IMR-90 (cell line): ENCODE measurements at regions of chr4 and their contacts with region 1.

Region 1: DNA sequence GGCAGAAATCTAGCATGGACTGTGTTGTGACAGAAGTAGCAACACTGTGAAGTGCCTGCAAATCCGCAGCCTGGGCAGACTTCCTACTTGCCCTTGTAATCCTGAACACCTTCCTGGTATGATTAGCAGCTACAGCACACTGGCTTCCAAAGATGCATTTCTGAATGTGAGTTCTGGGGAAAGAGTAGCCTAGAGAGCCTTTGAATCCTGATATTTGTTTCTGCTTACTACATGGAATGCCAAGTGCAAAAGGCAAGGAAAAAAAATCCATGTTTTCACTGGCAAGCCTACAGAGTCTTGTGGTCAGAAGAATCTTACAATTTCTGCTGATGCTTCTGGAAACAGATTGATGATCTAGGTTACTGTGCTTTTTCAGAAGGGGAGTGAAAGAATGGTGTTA is 223.7 kb downstream of the COL25A1 start:
- DNase-seq: peak; percentile 81
- ATAC-seq: peak; percentile 84
- H3K4me3 ChIP-seq: no peak overlapping the region
- H3K27ac ChIP-seq: peak overlapping the region; percentile 7; the same call in 1 of the 2 replicates
- H3K4me1 ChIP-seq: peaks cover 5% of the 10 kb centered on the region
- H3K27me3 ChIP-seq: no peaks in the 10 kb centered on the region
- CTCF ChIP-seq: no peak
- POLR2A ChIP-seq: no peak
- RAD21 ChIP-seq: no peak

Region 2: GRCh38 chr4:108881190-108881589 is 197.5 kb before region 1 on chr4:
- CTCF ChIA-PET with region 1: no interaction called
- POLR2A ChIA-PET with region 1: no interaction called
- dilution Hi-C with region 1: no loop called
- in situ Hi-C with region 1: no loop called
- intact Hi-C with region 1: loop called (anchors 5 kb)
- DNase-seq: peak; percentile 96
- ATAC-seq: peak; percentile 84
- H3K4me3 ChIP-seq: no peak overlapping the region
- H3K27ac ChIP-seq: no peak overlapping the region
- H3K4me1 ChIP-seq: peaks cover 2% of the 10 kb centered on the region; the same call in 1 of the 2 replicates
- H3K27me3 ChIP-seq: no peaks in the 10 kb centered on the region
- CTCF ChIP-seq: no peak
- POLR2A ChIP-seq: no peak
- RAD21 ChIP-seq: no peak